PC-9 (cell line): ENCODE measurements at regions of chr4 and their contacts with region 1.

Region 1: DNA sequence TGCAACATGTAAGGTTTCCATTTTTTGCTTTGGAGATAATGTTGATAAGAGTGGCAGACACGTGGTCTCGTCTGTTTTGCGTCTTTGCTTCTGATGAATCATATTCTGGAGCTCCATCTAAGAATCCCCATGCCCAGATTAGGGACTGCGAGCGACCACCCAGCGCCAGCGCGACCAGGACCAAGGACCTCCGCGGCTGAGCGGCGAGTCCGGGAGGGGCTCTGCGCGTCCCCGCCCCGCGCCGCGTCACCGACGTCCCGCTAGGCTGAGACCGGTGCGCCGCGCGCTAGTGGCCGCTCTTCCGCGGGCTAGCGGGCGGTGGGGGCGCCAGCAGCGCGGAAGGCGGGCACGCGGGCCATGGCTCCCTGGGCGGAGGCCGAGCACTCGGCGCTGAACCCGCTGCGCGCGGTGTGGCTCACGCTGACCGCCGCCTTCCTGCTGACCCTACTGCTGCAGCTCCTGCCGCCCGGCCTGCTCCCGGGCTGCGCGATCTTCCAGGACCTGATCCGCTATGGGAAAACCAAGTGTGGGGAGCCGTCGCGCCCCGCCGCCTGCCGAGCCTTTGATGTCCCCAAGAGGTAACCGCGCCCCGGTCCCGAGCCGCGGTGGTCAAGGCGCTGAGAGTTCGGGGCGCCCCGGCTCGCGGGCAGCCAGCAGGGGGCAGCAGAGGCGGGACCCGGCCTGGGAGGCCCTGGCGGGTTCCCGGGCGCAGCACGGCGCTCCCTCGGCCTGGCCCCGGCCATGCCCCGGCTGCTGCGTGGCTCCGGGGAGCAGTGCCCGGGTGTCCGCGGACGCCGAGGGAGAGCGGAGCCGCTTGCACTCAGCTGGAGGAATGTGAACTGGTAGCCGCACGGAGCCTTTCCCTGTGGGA is at the start of gene SRD5A3:
- DNase-seq: peak; percentile 52 to 86
- H3K4me3 ChIP-seq: peak within 1 kb of the TSS; percentile 64
- H3K27ac ChIP-seq: peak within 1 kb of the TSS; percentile 58
- H3K4me1 ChIP-seq: peaks cover 27% of the 10 kb centered on the region
- H3K27me3 ChIP-seq: no peaks in the 10 kb centered on the region
- CTCF ChIP-seq: peak; percentile 76
- total RNA-seq, gene SRD5A3: 7.3 and 9.9 TPM in 2 replicates

Region 2: GRCh38 chr4:54678826-54679225 is 667.4 kb before region 1 on chr4:
- CTCF ChIA-PET with region 1: no interaction called
- POLR2A ChIA-PET with region 1: interaction called, 32 read pairs
- intact Hi-C with region 1: no loop called
- DNase-seq: no peak
- H3K4me3 ChIP-seq: no peak overlapping the region
- H3K27ac ChIP-seq: no peak overlapping the region
- H3K4me1 ChIP-seq: no peaks in the 10 kb centered on the region
- H3K27me3 ChIP-seq: no peaks in the 10 kb centered on the region
- CTCF ChIP-seq: no peak

Region 3: GRCh38 chr4:55424791-55425190 is 78.6 kb after region 1 on chr4:
- CTCF ChIA-PET with region 1: no interaction called
- POLR2A ChIA-PET with region 1: no interaction called
- intact Hi-C with region 1: loop called (anchors 5 kb)
- DNase-seq: no peak
- H3K4me3 ChIP-seq: no peak overlapping the region
- H3K27ac ChIP-seq: no peak overlapping the region
- H3K4me1 ChIP-seq: no peaks in the 10 kb centered on the region
- H3K27me3 ChIP-seq: no peaks in the 10 kb centered on the region
- CTCF ChIP-seq: no peak

Region 4: DNA sequence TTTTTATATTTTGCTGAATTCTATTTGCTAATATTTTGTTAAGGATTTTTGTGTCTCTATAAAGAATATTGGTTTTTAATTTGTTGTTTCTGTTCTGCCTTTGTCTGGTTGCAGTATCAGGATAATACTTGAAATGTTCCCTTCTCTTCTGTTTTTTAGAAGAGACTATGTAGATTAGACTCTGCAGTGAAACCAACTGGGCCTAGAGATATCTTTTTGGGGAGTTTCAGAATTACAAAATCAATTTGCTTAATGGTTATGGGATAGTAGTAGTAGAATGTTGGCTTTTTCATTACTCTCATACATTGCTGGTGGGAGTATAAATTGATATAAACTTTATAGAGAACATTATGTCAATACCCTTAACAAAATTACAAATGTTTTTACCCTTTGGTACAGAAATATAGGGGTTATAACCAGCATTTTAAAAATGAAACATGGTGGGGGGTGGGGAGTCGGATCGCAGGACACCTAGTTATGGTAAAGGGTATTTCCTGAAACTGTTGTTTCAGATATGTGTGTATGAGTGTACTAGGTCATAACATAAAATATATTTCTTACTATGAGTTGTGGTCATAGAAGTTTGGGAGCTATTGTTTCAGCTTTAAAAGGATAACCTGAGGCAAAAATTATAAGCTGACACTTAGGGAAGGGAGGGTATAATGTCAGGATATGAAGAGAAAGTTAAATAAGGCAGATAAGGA is 171.5 kb after region 1 on chr4:
- CTCF ChIA-PET with region 1: no interaction called
- POLR2A ChIA-PET with region 1: no interaction called
- intact Hi-C with region 1: no loop called
- DNase-seq: no peak
- H3K4me3 ChIP-seq: no peak overlapping the region
- H3K27ac ChIP-seq: no peak overlapping the region
- H3K4me1 ChIP-seq: no peaks in the 10 kb centered on the region
- H3K27me3 ChIP-seq: no peaks in the 10 kb centered on the region
- CTCF ChIP-seq: no peak